PC-3 (cell line): ENCODE measurements at regions of chr15 and their contacts with region 1.

Region 1: GRCh38 chr15:95932676-95933075 is 397.8 kb upstream of the NR2F2 start:
- DNase-seq: peak; percentile 83
- ATAC-seq: peak; percentile 96
- H3K4me3 ChIP-seq: peak overlapping the region; percentile 4; the same call in 1 of the 2 replicates
- H3K27ac ChIP-seq: peak overlapping the region; percentile 68
- H3K4me1 ChIP-seq: peaks cover 22% of the 10 kb centered on the region
- H3K27me3 ChIP-seq: no peaks in the 10 kb centered on the region
- CTCF ChIP-seq: no peak

Region 2: DNA sequence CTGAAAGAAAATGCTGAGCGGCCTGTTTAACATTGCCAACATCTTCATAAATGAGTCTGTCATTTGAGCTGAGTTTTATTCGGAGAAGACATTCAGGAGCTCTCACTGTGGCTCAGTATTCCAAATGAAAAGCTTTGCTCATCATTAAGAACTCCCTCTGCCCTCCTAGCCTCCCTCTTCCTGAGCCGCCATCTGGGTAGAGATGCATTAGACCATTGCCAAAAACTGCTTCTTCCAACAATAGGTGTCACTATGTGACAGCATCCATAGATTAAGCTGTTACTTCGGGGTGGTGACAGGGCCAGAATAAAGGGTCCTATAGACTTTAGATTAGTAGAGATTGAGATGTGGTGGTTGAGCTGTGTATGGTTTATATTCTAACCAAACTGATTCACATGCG is 103.6 kb before region 1 on chr15:
- CTCF ChIA-PET with region 1: no interaction called
- POLR2A ChIA-PET with region 1: no interaction called
- intact Hi-C with region 1: no loop called
- DNase-seq: no peak
- ATAC-seq: no peak
- H3K4me3 ChIP-seq: no peak overlapping the region
- H3K27ac ChIP-seq: no peak overlapping the region
- H3K4me1 ChIP-seq: no peaks in the 10 kb centered on the region
- H3K27me3 ChIP-seq: no peaks in the 10 kb centered on the region
- CTCF ChIP-seq: no peak

Region 3: GRCh38 chr15:95994418-95994817 is 61.7 kb after region 1 on chr15:
- CTCF ChIA-PET with region 1: no interaction called
- POLR2A ChIA-PET with region 1: no interaction called
- intact Hi-C with region 1: no loop called
- DNase-seq: no peak
- ATAC-seq: no peak
- H3K4me3 ChIP-seq: no peak overlapping the region
- H3K27ac ChIP-seq: no peak overlapping the region
- H3K4me1 ChIP-seq: peaks cover 6% of the 10 kb centered on the region
- H3K27me3 ChIP-seq: no peaks in the 10 kb centered on the region
- CTCF ChIP-seq: no peak

Region 4: GRCh38 chr15:96028620-96029019 is 95.9 kb after region 1 on chr15:
- CTCF ChIA-PET with region 1: no interaction called
- POLR2A ChIA-PET with region 1: no interaction called
- intact Hi-C with region 1: loop called (anchors 5 kb)
- DNase-seq: no peak
- ATAC-seq: no peak
- H3K4me3 ChIP-seq: no peak overlapping the region
- H3K27ac ChIP-seq: no peak overlapping the region
- H3K4me1 ChIP-seq: peaks cover 11% of the 10 kb centered on the region
- H3K27me3 ChIP-seq: no peaks in the 10 kb centered on the region
- CTCF ChIP-seq: 0 out of 2 replicates have a peak, but pooled peaks have one; percentile 18

Region 5: GRCh38 chr15:96273317-96274086 is 340.8 kb after region 1 on chr15:
- CTCF ChIA-PET with region 1: no interaction called
- POLR2A ChIA-PET with region 1: no interaction called
- intact Hi-C with region 1: loop called (anchors 5 kb)
- DNase-seq: peak; percentile 98
- ATAC-seq: peak; percentile 91
- H3K4me3 ChIP-seq: peak overlapping the region; percentile 49; the same call in 1 of the 2 replicates
- H3K27ac ChIP-seq: peak overlapping the region; percentile 88
- H3K4me1 ChIP-seq: peaks cover 76% of the 10 kb centered on the region
- H3K27me3 ChIP-seq: no peaks in the 10 kb centered on the region
- CTCF ChIP-seq: no peak